MCF 10A (cell line): ENCODE measurements at regions of chr10 and their contacts with region 1.

Region 1: GRCh38 chr10:7687228-7687907 is 15.7 kb upstream of the ITIH2 start:
- DNase-seq: peak; percentile 89
- H3K4me3 Mint-ChIP-seq: no peak overlapping the region
- H3K27ac Mint-ChIP-seq: no peak overlapping the region
- H3K4me1 Mint-ChIP-seq: peaks cover 12% of the 10 kb centered on the region
- H3K27me3 Mint-ChIP-seq: peaks cover 1% of the 10 kb centered on the region
- CTCF ChIP-seq: peak; percentile 90

Region 2: GRCh38 chr10:7354354-7355026 is 332.9 kb before region 1 on chr10:
- CTCF ChIA-PET with region 1: no interaction called
- POLR2A ChIA-PET with region 1: no interaction called
- intact Hi-C with region 1: no loop called
- DNase-seq: peak; percentile 84
- H3K4me3 Mint-ChIP-seq: no peak overlapping the region
- H3K27ac Mint-ChIP-seq: peak overlapping the region; percentile 81
- H3K4me1 Mint-ChIP-seq: peaks cover 13% of the 10 kb centered on the region
- H3K27me3 Mint-ChIP-seq: no peaks in the 10 kb centered on the region
- CTCF ChIP-seq: no peak

Region 3: DNA sequence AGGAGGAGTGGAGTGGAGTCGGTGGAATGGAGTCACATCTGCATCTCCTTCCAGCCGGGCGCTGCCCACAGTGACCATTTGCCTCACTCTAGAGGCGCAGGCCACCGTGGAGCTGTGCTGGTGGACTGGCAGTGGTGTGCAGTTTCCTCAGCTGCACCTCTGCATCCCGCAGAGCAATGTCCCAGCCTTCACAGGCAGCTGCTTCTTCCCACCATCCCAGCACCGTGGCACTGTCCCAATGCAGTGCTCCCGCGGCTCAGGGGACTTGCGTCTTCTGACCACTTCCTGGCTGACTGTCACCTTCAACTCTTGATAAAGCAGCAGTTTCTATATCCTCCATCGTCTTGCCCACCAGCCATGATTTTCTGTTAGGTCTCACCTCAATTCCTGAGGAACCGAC is 186.2 kb before region 1 on chr10:
- CTCF ChIA-PET with region 1: no interaction called
- POLR2A ChIA-PET with region 1: no interaction called
- intact Hi-C with region 1: no loop called
- DNase-seq: no peak
- H3K4me3 Mint-ChIP-seq: no peak overlapping the region
- H3K27ac Mint-ChIP-seq: no peak overlapping the region
- H3K4me1 Mint-ChIP-seq: no peaks in the 10 kb centered on the region
- H3K27me3 Mint-ChIP-seq: peaks cover 17% of the 10 kb centered on the region
- CTCF ChIP-seq: no peak

Region 4: GRCh38 chr10:7533657-7534479 is 153.5 kb before region 1 on chr10:
- CTCF ChIA-PET with region 1: interaction called, 68 read pairs
- POLR2A ChIA-PET with region 1: interaction called, 8 read pairs
- intact Hi-C with region 1: loop called (anchors 1 kb)
- DNase-seq: no peak
- H3K4me3 Mint-ChIP-seq: no peak overlapping the region
- H3K27ac Mint-ChIP-seq: no peak overlapping the region
- H3K4me1 Mint-ChIP-seq: peaks cover 5% of the 10 kb centered on the region
- H3K27me3 Mint-ChIP-seq: peaks cover 32% of the 10 kb centered on the region
- CTCF ChIP-seq: no peak

Region 5: GRCh38 chr10:7671121-7671520 is 16.2 kb before region 1 on chr10:
- CTCF ChIA-PET with region 1: interaction called, 19 read pairs
- POLR2A ChIA-PET with region 1: no interaction called
- intact Hi-C with region 1: no loop called
- DNase-seq: no peak
- H3K4me3 Mint-ChIP-seq: no peak overlapping the region
- H3K27ac Mint-ChIP-seq: no peak overlapping the region
- H3K4me1 Mint-ChIP-seq: peaks cover 6% of the 10 kb centered on the region
- H3K27me3 Mint-ChIP-seq: peaks cover 45% of the 10 kb centered on the region
- CTCF ChIP-seq: no peak

Region 6: DNA sequence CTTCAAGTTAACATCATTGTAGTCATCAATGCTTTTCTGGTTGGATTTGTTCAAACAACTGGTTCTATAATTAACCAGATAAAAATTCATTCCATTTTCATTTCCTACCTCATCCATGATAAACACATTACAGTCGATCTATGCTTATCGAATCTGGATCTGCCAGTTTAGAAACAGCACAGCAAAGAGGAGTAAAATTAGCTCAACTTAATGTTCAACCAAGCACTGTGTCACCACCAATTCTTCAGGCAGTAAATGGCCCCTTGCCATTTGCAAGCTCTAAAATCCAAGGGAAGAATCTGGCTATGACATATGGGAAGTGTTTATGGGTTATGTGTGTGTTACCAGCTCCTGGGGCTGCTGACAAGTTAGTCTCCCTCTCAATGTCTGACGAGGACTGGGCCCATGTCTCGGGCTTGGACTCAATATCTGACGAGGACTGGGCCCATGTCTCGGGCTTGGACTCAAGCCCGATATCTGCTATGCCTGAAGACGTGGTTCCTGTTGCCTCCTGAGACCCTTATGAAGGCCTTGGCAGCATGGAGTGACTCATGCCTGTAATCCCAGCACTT is 10.0 kb after region 1 on chr10:
- CTCF ChIA-PET with region 1: interaction called, 18 read pairs
- POLR2A ChIA-PET with region 1: interaction called, 3 read pairs
- intact Hi-C with region 1: no loop called
- DNase-seq: no peak
- H3K4me3 Mint-ChIP-seq: no peak overlapping the region
- H3K27ac Mint-ChIP-seq: no peak overlapping the region
- H3K4me1 Mint-ChIP-seq: no peaks in the 10 kb centered on the region
- H3K27me3 Mint-ChIP-seq: peaks cover 5% of the 10 kb centered on the region
- CTCF ChIP-seq: no peak

Region 7: DNA sequence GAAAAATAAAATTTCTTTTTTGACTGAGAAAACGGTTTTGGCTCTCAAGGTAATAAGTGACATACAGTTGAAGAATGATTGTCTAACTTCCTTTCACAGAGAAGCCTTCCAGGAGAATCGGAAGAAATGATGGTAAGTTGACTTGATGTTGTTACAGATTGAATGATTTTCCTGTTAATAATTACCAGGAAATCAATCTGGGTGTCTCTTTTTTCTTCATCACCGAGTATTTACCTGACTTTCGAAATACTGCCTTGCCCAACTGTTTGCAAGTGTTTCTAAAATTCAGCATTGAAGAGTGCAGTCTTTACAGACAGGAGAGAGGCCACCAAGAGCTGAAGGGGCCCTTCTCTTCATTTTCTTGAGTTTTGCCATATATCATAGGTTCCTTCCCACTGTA is 19.7 kb after region 1 on chr10:
- CTCF ChIA-PET with region 1: interaction called, 26 read pairs
- POLR2A ChIA-PET with region 1: no interaction called
- intact Hi-C with region 1: no loop called
- DNase-seq: no peak
- H3K4me3 Mint-ChIP-seq: no peak overlapping the region
- H3K27ac Mint-ChIP-seq: no peak overlapping the region
- H3K4me1 Mint-ChIP-seq: no peaks in the 10 kb centered on the region
- H3K27me3 Mint-ChIP-seq: peaks cover 51% of the 10 kb centered on the region
- CTCF ChIP-seq: no peak

Region 8: DNA sequence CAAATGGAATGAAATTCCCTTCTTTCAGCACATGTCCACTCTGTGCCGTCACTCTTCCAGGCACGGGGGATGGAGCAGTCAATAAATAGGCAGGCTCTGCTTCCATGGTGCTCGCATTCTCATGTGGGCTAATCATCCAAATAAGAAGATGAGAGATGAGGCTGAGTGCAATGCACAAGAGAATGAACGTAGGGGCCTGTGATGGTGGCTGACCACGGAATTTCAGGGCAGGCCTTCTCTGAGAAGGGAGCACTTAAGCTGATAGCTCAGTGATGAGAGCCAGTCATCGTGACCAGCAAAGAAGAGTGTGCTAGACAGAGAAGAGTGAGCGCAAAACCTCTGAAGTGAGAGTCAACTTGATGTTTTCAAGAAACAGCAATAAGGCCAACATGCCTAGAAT is 178.8 kb after region 1 on chr10:
- CTCF ChIA-PET with region 1: no interaction called
- POLR2A ChIA-PET with region 1: no interaction called
- intact Hi-C with region 1: no loop called
- DNase-seq: no peak
- H3K4me3 Mint-ChIP-seq: no peak overlapping the region
- H3K27ac Mint-ChIP-seq: no peak overlapping the region
- H3K4me1 Mint-ChIP-seq: no peaks in the 10 kb centered on the region
- H3K27me3 Mint-ChIP-seq: no peaks in the 10 kb centered on the region
- CTCF ChIP-seq: no peak

Region 9: GRCh38 chr10:9302120-9302746 is 1614.9 kb after region 1 on chr10:
- CTCF ChIA-PET with region 1: interaction called, 3 read pairs
- POLR2A ChIA-PET with region 1: no interaction called
- intact Hi-C with region 1: loop called (anchors 1 kb)
- DNase-seq: peak; percentile 74
- H3K4me3 Mint-ChIP-seq: no peak overlapping the region
- H3K27ac Mint-ChIP-seq: no peak overlapping the region
- H3K4me1 Mint-ChIP-seq: no peaks in the 10 kb centered on the region
- H3K27me3 Mint-ChIP-seq: no peaks in the 10 kb centered on the region
- CTCF ChIP-seq: peak; percentile 38